ENCODE measurements at regions of chr3 and their contacts with region 1.

Region 1: GRCh38 chr3:113211330-113212149 is at the start of gene BOC:
- DNase-seq: peak; percentile 69
- ATAC-seq: peak; percentile 87
- total RNA-seq, gene BOC: 7.1 TPM

Region 2: GRCh38 chr3:112647122-112647521 is 564.4 kb before region 1 on chr3:
- intact Hi-C with region 1: no loop called
- DNase-seq: no peak
- ATAC-seq: peak; percentile 57

Region 3: GRCh38 chr3:113002679-113003078 is 208.9 kb before region 1 on chr3:
- intact Hi-C with region 1: no loop called
- DNase-seq: no peak
- ATAC-seq: no peak

Region 4: DNA sequence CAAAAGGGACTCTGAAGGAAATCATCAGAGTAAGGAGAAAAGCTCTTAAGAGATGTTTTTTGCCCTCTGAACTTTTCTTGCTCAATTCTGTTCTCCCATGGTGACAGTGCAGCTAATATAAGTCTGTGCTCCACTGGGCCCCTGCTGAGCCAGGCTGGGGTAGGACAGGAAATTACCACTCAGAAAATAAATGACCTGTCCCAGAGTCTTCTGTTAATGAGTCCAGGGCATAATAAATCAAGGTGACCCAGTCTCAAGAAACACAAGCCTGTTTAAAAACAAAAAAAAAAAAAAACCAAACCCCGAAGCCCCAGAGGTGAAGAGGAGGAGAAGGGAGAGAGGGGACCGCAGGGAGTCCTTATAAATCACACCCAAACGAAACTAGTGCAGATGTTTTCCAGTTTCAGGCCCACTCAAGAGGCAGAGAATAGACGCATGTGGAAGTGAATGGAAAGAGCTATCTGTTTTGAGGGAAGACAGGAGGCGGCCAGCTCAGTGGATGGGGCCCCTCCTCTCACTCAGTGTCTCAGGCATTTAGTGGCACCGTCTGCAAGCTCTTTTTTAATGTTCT is 60.0 kb before region 1 on chr3:
- intact Hi-C with region 1: loop called (anchors 5 kb)
- DNase-seq: no peak
- ATAC-seq: peak; percentile 72

Region 5: GRCh38 chr3:113166719-113167492 is 44.6 kb before region 1 on chr3:
- intact Hi-C with region 1: loop called (anchors 5 kb)
- DNase-seq: no peak
- ATAC-seq: peak; percentile 81

Region 6: GRCh38 chr3:113249111-113249510 is 37.6 kb after region 1 on chr3:
- intact Hi-C with region 1: no loop called
- DNase-seq: no peak
- ATAC-seq: no peak

Region 7: GRCh38 chr3:113287803-113288648 is 76.5 kb after region 1 on chr3:
- intact Hi-C with region 1: loop called (anchors 5 kb)
- DNase-seq: no peak
- ATAC-seq: peak; percentile 45